ENCODE measurements at regions of chr5 and their contacts with region 1.

Region 1: GRCh38 chr5:139273572-139274289 is 19.8 kb upstream of the MATR3 start:
- DNase-seq: peak; percentile 93
- H3K4me3 Mint-ChIP-seq: peak overlapping the region; percentile 96
- H3K27ac Mint-ChIP-seq: peak overlapping the region; percentile 89
- H3K4me1 Mint-ChIP-seq: peaks cover 60% of the 10 kb centered on the region
- H3K27me3 Mint-ChIP-seq: peaks cover 2% of the 10 kb centered on the region

Region 2: GRCh38 chr5:139341650-139342422 is 68.1 kb after region 1 on chr5 and contains the start of gene PAIP2:
- CTCF ChIA-PET with region 1: interaction called, 8 read pairs
- POLR2A ChIA-PET with region 1: interaction called, 6 read pairs
- intact Hi-C with region 1: loop called (anchors 1 kb)
- DNase-seq: peak; percentile 98
- H3K4me3 Mint-ChIP-seq: peak within 1 kb of the TSS; percentile 97
- H3K27ac Mint-ChIP-seq: peak within 1 kb of the TSS; percentile 95
- H3K4me1 Mint-ChIP-seq: peaks cover 46% of the 10 kb centered on the region
- H3K27me3 Mint-ChIP-seq: no peaks in the 10 kb centered on the region
- total RNA-seq, gene PAIP2: 104 to 110 TPM

Region 3: DNA sequence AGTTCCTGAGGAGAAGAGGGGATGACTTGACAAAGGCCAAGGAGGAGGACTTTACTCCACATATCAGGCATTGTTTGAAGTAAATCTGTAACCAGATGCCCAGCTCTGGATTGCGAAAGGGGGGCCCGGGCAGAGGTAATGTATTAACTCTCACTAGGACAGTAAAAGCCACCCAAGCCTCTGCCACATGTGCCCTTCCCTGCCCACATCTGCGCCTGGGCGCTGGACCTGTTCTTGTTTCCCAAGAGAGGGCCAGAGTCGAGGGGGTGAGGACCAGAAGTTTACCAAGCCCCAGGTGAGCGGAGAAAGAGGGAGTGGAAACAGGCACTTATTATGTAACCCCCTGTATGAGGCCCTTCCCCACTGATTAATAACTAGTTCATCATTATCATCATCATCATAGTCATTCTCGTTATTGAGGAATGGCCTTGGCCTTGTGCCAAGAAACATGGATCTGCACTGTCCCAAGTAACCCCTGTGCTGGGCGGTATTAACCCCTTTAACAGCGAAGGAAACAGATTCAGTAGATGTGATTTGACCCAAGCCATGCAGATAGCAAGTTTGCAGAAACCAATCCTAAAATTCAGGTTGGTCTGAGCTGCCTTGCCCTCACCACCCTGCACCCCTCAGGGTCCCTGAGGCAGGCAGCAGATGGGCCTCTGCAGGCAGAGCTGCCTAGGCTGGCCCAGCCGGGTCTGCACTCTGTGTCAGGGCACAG is 109.7 kb after region 1 on chr5 and contains the start of gene SLC23A1:
- CTCF ChIA-PET with region 1: no interaction called
- POLR2A ChIA-PET with region 1: no interaction called
- intact Hi-C with region 1: no loop called
- DNase-seq: no peak
- H3K4me3 Mint-ChIP-seq: no peak within 1 kb of the TSS
- H3K27ac Mint-ChIP-seq: no peak within 1 kb of the TSS
- H3K4me1 Mint-ChIP-seq: peaks cover 23% of the 10 kb centered on the region
- H3K27me3 Mint-ChIP-seq: no peaks in the 10 kb centered on the region
- total RNA-seq, gene SLC23A1: 1.0 to 1.4 TPM

Measured in activated CD4-positive, alpha-beta memory T cell treated with anti-CD3 and anti-CD28 coated beads for 36 hours (primary cell).